Caco-2 (cell line): ENCODE measurements at regions of chr12 and their contacts with region 1.

Region 1: GRCh38 chr12:56078990-56079664 is 838 bp upstream of the ERBB3 start:
- DNase-seq: peak; percentile 93 to 96
- H3K4me3 ChIP-seq: peak overlapping the region; percentile 74
- H3K4me3 Mint-ChIP-seq: peak overlapping the region; percentile 89
- H3K27ac Mint-ChIP-seq: peak overlapping the region; percentile 92
- H3K4me1 ChIP-seq: peaks cover 24% of the 10 kb centered on the region
- H3K4me1 Mint-ChIP-seq: peaks cover 7% of the 10 kb centered on the region
- H3K27me3 ChIP-seq: no peaks in the 10 kb centered on the region
- H3K27me3 Mint-ChIP-seq: no peaks in the 10 kb centered on the region
- CTCF ChIP-seq: peak; percentile 69 to 84

Region 2: GRCh38 chr12:55687746-55688145 is 391.4 kb before region 1 on chr12:
- CTCF ChIA-PET with region 1: no interaction called
- POLR2A ChIA-PET with region 1: no interaction called
- intact Hi-C with region 1: no loop called
- DNase-seq: no peak
- H3K4me3 ChIP-seq: no peak overlapping the region
- H3K4me3 Mint-ChIP-seq: no peak overlapping the region
- H3K27ac Mint-ChIP-seq: no peak overlapping the region
- H3K4me1 ChIP-seq: peaks cover 3% of the 10 kb centered on the region; the same call in 1 of the 2 replicates
- H3K4me1 Mint-ChIP-seq: peaks cover 4% of the 10 kb centered on the region
- H3K27me3 ChIP-seq: no peaks in the 10 kb centered on the region
- H3K27me3 Mint-ChIP-seq: no peaks in the 10 kb centered on the region
- CTCF ChIP-seq: no peak

Region 3: DNA sequence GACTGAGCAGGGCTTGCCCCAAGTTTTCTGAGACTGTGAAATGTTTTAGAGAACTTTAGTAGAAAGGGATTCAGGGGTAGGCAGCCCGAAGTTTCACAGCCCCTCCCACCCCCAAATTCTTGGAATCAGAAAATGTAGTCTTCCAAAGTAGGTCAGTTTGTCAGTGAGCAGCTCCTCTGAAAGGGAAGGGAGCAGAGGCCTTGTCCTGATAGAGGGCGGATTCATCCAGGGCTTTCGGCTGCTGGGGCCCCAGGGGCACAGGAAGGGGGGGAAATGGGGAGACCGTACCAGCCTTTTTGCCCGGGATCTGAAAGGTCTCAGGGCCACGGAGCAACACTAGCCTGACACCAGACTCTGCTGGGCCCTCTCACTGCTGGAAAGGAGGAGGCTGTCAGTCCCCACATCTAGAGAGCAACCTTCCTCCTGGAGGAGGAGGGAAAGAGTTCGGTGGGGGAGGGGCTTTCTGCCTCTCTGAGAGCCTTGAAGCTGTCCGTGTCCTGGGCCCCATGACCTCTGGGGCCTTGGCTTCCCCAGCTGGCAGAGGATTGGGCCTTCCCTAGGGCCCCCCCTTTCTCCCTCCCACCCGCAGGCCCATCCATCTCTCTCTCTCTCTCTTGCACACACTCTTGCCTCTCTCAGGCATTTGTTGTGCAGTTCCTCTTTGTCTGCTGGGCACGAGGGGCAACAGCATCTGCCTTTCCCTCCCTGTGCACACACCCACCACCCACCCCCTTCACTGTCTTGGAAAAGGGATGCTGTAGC is 58.5 kb before region 1 on chr12 and contains the start of gene IKZF4:
- CTCF ChIA-PET with region 1: no interaction called
- POLR2A ChIA-PET with region 1: no interaction called
- intact Hi-C with region 1: no loop called
- DNase-seq: peak; percentile 72
- H3K4me3 ChIP-seq: no peak within 1 kb of the TSS
- H3K4me3 Mint-ChIP-seq: no peak within 1 kb of the TSS
- H3K27ac Mint-ChIP-seq: peak within 1 kb of the TSS; percentile 15
- H3K4me1 ChIP-seq: peaks cover 29% of the 10 kb centered on the region
- H3K4me1 Mint-ChIP-seq: peaks cover 20% of the 10 kb centered on the region
- H3K27me3 ChIP-seq: no peaks in the 10 kb centered on the region
- H3K27me3 Mint-ChIP-seq: no peaks in the 10 kb centered on the region
- CTCF ChIP-seq: no peak
- total RNA-seq, gene IKZF4: 15.6 and 15.7 TPM in 2 replicates

Region 4: DNA sequence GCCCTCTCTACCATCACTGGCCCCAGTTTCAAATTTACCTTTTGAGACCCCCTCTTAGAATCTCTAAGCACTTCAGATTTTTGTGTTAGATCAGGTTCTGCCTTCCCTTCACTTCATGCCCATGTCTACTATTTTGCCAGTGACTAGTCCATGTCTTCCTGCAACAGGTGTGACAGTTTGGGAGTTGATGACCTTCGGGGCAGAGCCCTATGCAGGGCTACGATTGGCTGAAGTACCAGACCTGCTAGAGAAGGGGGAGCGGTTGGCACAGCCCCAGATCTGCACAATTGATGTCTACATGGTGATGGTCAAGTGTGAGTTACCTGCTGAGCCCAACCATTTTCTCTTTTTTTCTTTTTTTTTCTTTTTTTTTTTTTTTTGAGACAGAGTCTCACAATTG is 19.5 kb after region 1 on chr12:
- CTCF ChIA-PET with region 1: interaction called, 22 read pairs
- POLR2A ChIA-PET with region 1: interaction called, 48 read pairs
- intact Hi-C with region 1: no loop called
- DNase-seq: no peak
- H3K4me3 ChIP-seq: no peak overlapping the region
- H3K4me3 Mint-ChIP-seq: no peak overlapping the region
- H3K27ac Mint-ChIP-seq: no peak overlapping the region
- H3K4me1 ChIP-seq: peaks cover 13% of the 10 kb centered on the region
- H3K4me1 Mint-ChIP-seq: peaks cover 7% of the 10 kb centered on the region
- H3K27me3 ChIP-seq: no peaks in the 10 kb centered on the region
- H3K27me3 Mint-ChIP-seq: no peaks in the 10 kb centered on the region
- CTCF ChIP-seq: no peak

Region 5: DNA sequence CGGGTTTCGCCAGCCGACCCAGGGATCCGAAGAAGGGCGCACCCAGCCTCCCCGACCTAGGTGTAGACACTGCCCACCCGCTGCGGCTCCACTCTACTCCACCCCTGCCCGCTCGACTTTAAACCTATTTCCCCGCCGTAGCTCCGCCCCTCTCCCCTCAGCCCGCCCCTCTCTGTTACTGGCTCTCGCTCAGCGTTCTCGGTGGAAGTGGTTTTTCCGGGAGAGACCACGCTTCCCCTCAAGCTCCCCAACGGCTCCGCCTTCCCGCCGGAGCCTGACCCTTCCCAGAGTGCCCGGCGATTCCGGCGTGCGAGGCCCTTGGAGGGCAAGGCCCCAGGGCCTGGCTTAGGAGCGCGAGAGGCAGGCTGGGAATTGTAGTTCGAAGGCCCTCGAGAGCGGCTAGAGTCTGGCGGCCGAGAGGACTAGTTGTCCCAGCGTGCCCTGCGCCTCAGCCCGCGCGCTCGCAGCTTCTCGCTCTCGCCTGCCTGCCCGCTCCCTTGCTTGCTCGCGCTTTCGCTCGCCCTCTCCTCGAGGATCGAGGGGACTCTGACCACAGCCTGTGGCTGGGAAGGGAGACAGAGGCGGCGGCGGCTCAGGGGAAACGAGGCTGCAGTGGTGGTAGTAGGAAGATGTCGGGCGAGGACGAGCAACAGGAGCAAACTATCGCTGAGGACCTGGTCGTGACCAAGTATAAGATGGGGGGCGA is 25.1 kb after region 1 on chr12 and contains the start of gene PA2G4:
- CTCF ChIA-PET with region 1: interaction called, 22 read pairs
- POLR2A ChIA-PET with region 1: interaction called, 48 read pairs
- intact Hi-C with region 1: loop called (anchors 1 kb)
- DNase-seq: peak; percentile 99
- H3K4me3 ChIP-seq: peak within 1 kb of the TSS; percentile 68
- H3K4me3 Mint-ChIP-seq: peak within 1 kb of the TSS; percentile 98
- H3K27ac Mint-ChIP-seq: peak within 1 kb of the TSS; percentile 99
- H3K4me1 ChIP-seq: peaks cover 22% of the 10 kb centered on the region
- H3K4me1 Mint-ChIP-seq: peaks cover 9% of the 10 kb centered on the region
- H3K27me3 ChIP-seq: no peaks in the 10 kb centered on the region; the same call in 1 of the 2 replicates
- H3K27me3 Mint-ChIP-seq: no peaks in the 10 kb centered on the region
- CTCF ChIP-seq: no peak
- total RNA-seq, gene PA2G4: 178 and 190 TPM in 2 replicates

Region 6: DNA sequence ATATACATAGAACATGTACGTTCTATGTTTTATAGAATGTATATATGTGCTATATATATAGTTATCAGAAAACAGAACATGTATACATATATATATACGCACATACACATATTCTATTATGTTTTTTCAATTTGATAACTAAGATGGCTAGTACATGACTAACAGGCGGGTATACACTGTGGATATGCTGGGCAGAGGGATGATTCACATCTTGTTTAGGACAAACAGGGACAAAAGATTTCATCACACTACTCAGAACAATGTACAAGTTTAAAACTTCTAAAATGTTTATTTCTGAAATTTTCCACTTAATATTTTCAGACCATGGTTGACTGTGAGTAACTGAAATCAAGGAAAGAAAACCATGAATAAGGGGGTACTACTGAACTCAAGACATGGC is 352.7 kb after region 1 on chr12:
- CTCF ChIA-PET with region 1: interaction called, 11 read pairs
- POLR2A ChIA-PET with region 1: no interaction called
- intact Hi-C with region 1: no loop called
- DNase-seq: no peak
- H3K4me3 ChIP-seq: no peak overlapping the region
- H3K4me3 Mint-ChIP-seq: no peak overlapping the region
- H3K27ac Mint-ChIP-seq: no peak overlapping the region
- H3K4me1 ChIP-seq: no peaks in the 10 kb centered on the region
- H3K4me1 Mint-ChIP-seq: no peaks in the 10 kb centered on the region
- H3K27me3 ChIP-seq: no peaks in the 10 kb centered on the region
- H3K27me3 Mint-ChIP-seq: no peaks in the 10 kb centered on the region
- CTCF ChIP-seq: no peak